ENCODE measurements at regions of chr6 and their contacts with region 1.

Region 1: GRCh38 chr6:98834060-98835031 is at the start of gene POU3F2:
- DNase-seq: peak; percentile 71
- H3K4me3 Mint-ChIP-seq: peak within 1 kb of the TSS; percentile 86
- H3K27ac Mint-ChIP-seq: no peak within 1 kb of the TSS
- H3K4me1 Mint-ChIP-seq: peaks cover 17% of the 10 kb centered on the region
- H3K27me3 Mint-ChIP-seq: peaks cover 100% of the 10 kb centered on the region
- CTCF ChIP-seq: no peak
- total RNA-seq, gene POU3F2: not detected in 2 replicates

Region 2: DNA sequence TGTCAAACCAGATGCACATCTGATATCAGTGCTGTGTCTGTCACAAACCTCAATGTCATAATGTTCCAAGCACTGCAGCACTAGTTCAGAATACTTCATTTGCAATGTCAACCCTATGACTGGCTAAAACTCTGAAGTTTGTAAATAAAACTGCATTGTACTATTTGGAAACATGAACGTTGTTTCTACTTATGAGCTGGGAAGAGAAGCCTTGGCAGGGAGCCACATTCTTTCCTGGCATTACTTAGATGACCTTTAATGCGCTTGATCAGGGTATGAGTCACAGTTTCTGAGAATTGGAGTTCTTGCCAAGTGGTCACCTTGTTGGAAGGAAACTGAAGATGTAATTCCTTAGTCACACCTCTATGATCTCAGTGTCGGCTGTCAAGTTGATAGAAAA is 886.5 kb before region 1 on chr6:
- CTCF ChIA-PET with region 1: no interaction called
- POLR2A ChIA-PET with region 1: no interaction called
- intact Hi-C with region 1: loop called (anchors 10 kb)
- DNase-seq: peak; percentile 97
- H3K4me3 Mint-ChIP-seq: no peak overlapping the region
- H3K27ac Mint-ChIP-seq: no peak overlapping the region
- H3K4me1 Mint-ChIP-seq: no peaks in the 10 kb centered on the region
- H3K27me3 Mint-ChIP-seq: peaks cover 24% of the 10 kb centered on the region
- CTCF ChIP-seq: no peak